ENCODE measurements at regions of chr10 and their contacts with region 1.

Region 1: GRCh38 chr10:43292755-43293676 is 26.2 kb upstream of the RASGEF1A start:
- DNase-seq: peak; percentile 56
- H3K4me3 ChIP-seq: no peak overlapping the region
- H3K27ac ChIP-seq: no peak overlapping the region
- H3K4me1 ChIP-seq: no peaks in the 10 kb centered on the region
- H3K27me3 ChIP-seq: no peaks in the 10 kb centered on the region
- CTCF ChIP-seq: peak; percentile 73

Region 2: GRCh38 chr10:42827201-42827600 is 465.8 kb before region 1 on chr10:
- intact Hi-C with region 1: no loop called
- DNase-seq: no peak
- H3K4me3 ChIP-seq: no peak overlapping the region
- H3K27ac ChIP-seq: no peak overlapping the region
- H3K4me1 ChIP-seq: no peaks in the 10 kb centered on the region
- H3K27me3 ChIP-seq: no peaks in the 10 kb centered on the region
- CTCF ChIP-seq: no peak

Region 3: DNA sequence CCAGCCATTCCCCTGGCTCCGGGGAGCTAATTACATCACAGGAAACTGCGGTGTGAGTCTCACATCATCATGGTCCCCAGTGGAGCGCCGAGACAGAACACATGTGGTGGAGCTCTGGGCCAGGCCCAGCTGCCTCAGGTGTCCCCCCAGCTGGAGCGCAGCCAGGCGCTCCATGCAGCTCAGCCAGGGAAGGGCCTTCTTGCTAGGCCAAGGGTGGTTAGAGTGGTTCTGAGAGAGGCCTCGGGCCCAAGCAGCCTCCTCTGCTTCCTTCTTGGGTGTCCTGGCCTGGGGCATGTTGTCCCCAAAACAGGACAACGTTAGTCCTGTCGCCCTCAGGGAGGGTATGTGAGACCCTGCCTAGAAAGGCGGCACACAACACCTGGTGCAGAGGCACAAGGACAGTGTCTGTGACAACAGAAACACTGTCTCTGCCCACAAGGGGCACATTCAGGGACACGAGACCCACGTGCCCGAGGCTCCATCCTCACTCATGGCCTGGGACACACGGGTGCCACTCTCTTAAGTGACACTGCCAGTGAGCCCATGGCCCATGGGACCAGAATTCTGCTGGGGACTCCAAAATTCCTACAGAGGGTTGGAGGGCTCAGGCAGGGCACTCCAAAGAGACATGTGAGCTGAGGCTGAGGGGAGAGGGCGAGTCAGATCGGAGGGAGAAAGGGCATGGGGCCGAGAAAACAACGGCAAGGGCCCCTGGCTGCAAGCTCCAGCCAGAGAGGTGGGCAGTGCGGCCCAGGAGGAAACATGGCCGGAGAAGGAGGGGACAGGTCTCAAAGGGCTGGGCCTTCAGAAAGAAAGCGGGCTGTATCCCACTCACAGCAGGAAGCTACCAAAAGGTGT is 253.2 kb before region 1 on chr10:
- intact Hi-C with region 1: no loop called
- DNase-seq: peak; percentile 7
- H3K4me3 ChIP-seq: no peak overlapping the region
- H3K27ac ChIP-seq: no peak overlapping the region
- H3K4me1 ChIP-seq: no peaks in the 10 kb centered on the region
- H3K27me3 ChIP-seq: no peaks in the 10 kb centered on the region
- CTCF ChIP-seq: no peak

Region 4: GRCh38 chr10:43348511-43349312 is 55.7 kb after region 1 on chr10:
- intact Hi-C with region 1: loop called (anchors 2 kb)
- DNase-seq: peak; percentile 91
- H3K4me3 ChIP-seq: no peak overlapping the region
- H3K27ac ChIP-seq: no peak overlapping the region
- H3K4me1 ChIP-seq: no peaks in the 10 kb centered on the region
- H3K27me3 ChIP-seq: no peaks in the 10 kb centered on the region
- CTCF ChIP-seq: peak; percentile 91

Region 5: GRCh38 chr10:43420369-43421200 is 127.6 kb after region 1 on chr10:
- intact Hi-C with region 1: no loop called
- DNase-seq: peak; percentile 87
- H3K4me3 ChIP-seq: peak overlapping the region; percentile 46
- H3K27ac ChIP-seq: peak overlapping the region; percentile 97
- H3K4me1 ChIP-seq: peaks cover 5% of the 10 kb centered on the region
- H3K27me3 ChIP-seq: no peaks in the 10 kb centered on the region
- CTCF ChIP-seq: no peak

Region 6: DNA sequence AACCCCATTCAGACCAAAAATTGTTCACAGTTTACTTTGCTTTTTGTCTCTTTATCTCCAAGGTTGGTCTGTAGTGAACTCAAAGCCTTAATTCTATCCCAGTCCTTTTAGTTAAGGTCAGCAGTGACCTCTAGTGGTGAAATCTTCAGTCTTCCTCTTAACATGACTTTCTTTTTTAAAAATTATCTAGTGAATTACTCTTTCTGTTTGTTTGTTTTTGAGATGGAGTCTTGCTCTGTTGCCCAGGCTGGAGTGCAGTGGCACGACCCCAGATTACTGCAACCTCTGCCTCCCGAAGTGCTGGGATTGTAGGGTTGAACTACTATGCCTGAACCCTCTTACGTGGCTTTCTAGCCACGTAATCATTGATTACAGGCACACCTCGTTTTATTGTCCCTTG is 168.9 kb after region 1 on chr10:
- intact Hi-C with region 1: loop called (anchors 5 kb)
- DNase-seq: peak; percentile 57
- H3K4me3 ChIP-seq: no peak overlapping the region
- H3K27ac ChIP-seq: no peak overlapping the region
- H3K4me1 ChIP-seq: no peaks in the 10 kb centered on the region
- H3K27me3 ChIP-seq: no peaks in the 10 kb centered on the region
- CTCF ChIP-seq: peak; percentile 70

Region 7: GRCh38 chr10:44046605-44047004 is 753.6 kb after region 1 on chr10:
- intact Hi-C with region 1: no loop called
- DNase-seq: no peak
- H3K4me3 ChIP-seq: no peak overlapping the region
- H3K27ac ChIP-seq: no peak overlapping the region
- H3K4me1 ChIP-seq: no peaks in the 10 kb centered on the region
- H3K27me3 ChIP-seq: no peaks in the 10 kb centered on the region
- CTCF ChIP-seq: no peak

Measured in colonic mucosa (tissue), 4 donors.